GM10248 (cell line): ENCODE measurements at regions of chr9 and their contacts with region 1.

Region 1: GRCh38 chr9:91949946-91950664 is at the start of gene ROR2:
- DNase-seq: peak; percentile 74
- CTCF ChIP-seq: peak; percentile 60

Region 2: GRCh38 chr9:91312717-91313344 is 637.3 kb before region 1 on chr9:
- CTCF ChIA-PET with region 1: no interaction called
- POLR2A ChIA-PET with region 1: no interaction called
- DNase-seq: no peak
- CTCF ChIP-seq: no peak

Region 3: GRCh38 chr9:91775011-91775707 is 174.9 kb before region 1 on chr9:
- CTCF ChIA-PET with region 1: interaction called, 18 read pairs
- POLR2A ChIA-PET with region 1: no interaction called
- DNase-seq: peak; percentile 83
- CTCF ChIP-seq: peak; percentile 86

Region 4: DNA sequence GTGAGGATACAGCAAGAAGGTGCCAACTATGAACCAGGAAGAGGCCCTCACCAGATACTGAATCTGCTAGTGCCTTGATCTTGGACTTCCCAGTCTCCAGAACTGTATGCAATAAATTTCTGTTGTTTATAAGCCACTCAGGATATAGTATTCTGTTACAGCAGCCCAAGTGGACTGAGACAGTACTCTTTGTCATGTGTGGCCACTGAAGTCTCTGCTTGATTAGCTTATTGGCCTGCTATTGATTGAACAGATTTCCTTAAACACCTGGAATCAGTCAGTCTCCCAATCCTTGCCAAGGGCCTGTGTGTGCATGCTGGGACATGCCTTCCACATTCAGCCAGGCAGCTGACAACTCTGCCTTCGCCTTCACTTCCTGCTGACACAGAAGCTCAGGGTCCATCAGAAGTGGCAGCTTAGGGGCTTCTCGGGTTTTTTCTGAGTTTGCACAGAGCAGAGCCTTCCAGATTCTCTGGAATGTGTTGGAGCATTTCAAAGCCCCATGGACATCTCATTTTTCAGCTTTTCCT is 13.7 kb after region 1 on chr9:
- CTCF ChIA-PET with region 1: interaction called, 10 read pairs
- POLR2A ChIA-PET with region 1: no interaction called
- DNase-seq: no peak
- CTCF ChIP-seq: no peak

Region 5: DNA sequence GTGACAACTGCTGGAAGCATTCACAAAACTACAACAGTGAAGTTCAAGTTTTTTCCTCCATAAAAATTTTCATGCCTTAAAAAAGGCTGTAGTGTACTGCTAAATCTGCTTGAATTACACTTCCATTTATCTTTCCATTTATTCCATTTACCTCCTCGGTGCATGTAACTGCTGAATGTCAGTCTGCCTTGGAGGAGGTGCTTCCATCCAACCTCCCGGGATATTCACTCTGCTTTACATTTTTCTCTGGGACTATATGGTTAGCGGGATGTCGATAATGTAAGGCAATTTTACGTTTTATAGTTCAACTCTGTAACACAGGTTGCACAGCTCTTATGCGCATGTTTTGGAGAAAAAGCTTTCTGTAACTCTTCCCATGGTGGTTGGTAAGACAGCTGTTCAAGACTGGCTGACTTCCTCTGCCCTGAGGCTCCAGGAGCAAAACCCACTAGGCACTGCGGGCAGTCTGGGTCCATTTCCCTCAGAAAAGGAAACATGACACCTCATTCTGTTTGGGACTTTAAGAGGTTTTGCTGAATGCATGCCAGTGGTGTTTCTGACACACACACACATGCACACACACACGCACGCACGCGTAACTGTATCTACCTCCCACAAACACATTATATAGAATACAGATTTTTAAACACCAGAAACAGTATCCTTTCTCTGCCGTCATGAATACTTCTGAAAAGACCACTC is 99.0 kb after region 1 on chr9:
- CTCF ChIA-PET with region 1: no interaction called
- POLR2A ChIA-PET with region 1: no interaction called
- DNase-seq: no peak
- CTCF ChIP-seq: no peak

Region 6: GRCh38 chr9:92070036-92070435 is 119.9 kb after region 1 on chr9:
- CTCF ChIA-PET with region 1: no interaction called
- POLR2A ChIA-PET with region 1: no interaction called
- DNase-seq: no peak
- CTCF ChIP-seq: no peak